ENCODE measurements at regions of chr5 and their contacts with region 1.

Region 1: GRCh38 chr5:141032626-141033025 is 18.5 kb upstream of the PCDHB1 start:
- DNase-seq: no peak
- H3K4me3 ChIP-seq: no peak overlapping the region
- H3K27ac ChIP-seq: no peak overlapping the region
- H3K4me1 ChIP-seq: no peaks in the 10 kb centered on the region
- H3K27me3 ChIP-seq: no peaks in the 10 kb centered on the region; a peak in 1 of 7 replicates
- CTCF ChIP-seq: peak in 2 of 3 experiments; percentile 18 to 32; a peak in 2 of 4 replicates
- EP300 ChIP-seq: no peak
- POLR2A ChIP-seq: no peak
- RAD21 ChIP-seq: peak; percentile 20 to 52

Region 2: GRCh38 chr5:141017943-141018342 is 14.7 kb before region 1 on chr5:
- CTCF ChIA-PET with region 1: interaction called, 17 read pairs
- POLR2A ChIA-PET with region 1: interaction called, 3 read pairs
- DNase-seq: no peak
- H3K4me3 ChIP-seq: no peak overlapping the region
- H3K27ac ChIP-seq: no peak overlapping the region
- H3K4me1 ChIP-seq: no peaks in the 10 kb centered on the region
- H3K27me3 ChIP-seq: no peaks in the 10 kb centered on the region
- CTCF ChIP-seq: no peak
- EP300 ChIP-seq: no peak
- POLR2A ChIP-seq: no peak
- RAD21 ChIP-seq: no peak

Measured in H1 (cell line).